Activated T-helper 1 cell treated with anti-CD3 and anti-CD28 coated beads, Interleukin-12 subunit alpha, Interleukin-12 subunit beta, Interleukin-2, Interleukin-4 antibody, amounts not matched to agents 30 ng/mL and 10 ng/mL and 1 ng/mL, durations not matched to agents 14 hours and 24 hours and 36 hours (primary cell): ENCODE measurements at regions of chr2 and their contacts with region 1.

Region 1: GRCh38 chr2:10812362-10813162 is at the start of gene PDIA6:
- DNase-seq: peak; percentile 95
- H3K4me3 Mint-ChIP-seq: peak within 1 kb of the TSS; percentile 92
- H3K27ac Mint-ChIP-seq: peak within 1 kb of the TSS; percentile 91
- H3K4me1 Mint-ChIP-seq: peaks cover 31% of the 10 kb centered on the region
- H3K27me3 Mint-ChIP-seq: peaks cover 13% of the 10 kb centered on the region
- total RNA-seq, gene PDIA6: 171 and 173 TPM in 2 replicates

Region 2: GRCh38 chr2:8836971-8837794 is 1975.4 kb before region 1 on chr2 and contains the start of gene KIDINS220:
- intact Hi-C with region 1: loop called (anchors 5 kb)
- DNase-seq: peak; percentile 72
- H3K4me3 Mint-ChIP-seq: peak within 1 kb of the TSS; percentile 100
- H3K27ac Mint-ChIP-seq: peak within 1 kb of the TSS; percentile 96
- H3K4me1 Mint-ChIP-seq: peaks cover 31% of the 10 kb centered on the region
- H3K27me3 Mint-ChIP-seq: no peaks in the 10 kb centered on the region
- total RNA-seq, gene KIDINS220: 24.3 and 24.5 TPM in 2 replicates

Region 3: DNA sequence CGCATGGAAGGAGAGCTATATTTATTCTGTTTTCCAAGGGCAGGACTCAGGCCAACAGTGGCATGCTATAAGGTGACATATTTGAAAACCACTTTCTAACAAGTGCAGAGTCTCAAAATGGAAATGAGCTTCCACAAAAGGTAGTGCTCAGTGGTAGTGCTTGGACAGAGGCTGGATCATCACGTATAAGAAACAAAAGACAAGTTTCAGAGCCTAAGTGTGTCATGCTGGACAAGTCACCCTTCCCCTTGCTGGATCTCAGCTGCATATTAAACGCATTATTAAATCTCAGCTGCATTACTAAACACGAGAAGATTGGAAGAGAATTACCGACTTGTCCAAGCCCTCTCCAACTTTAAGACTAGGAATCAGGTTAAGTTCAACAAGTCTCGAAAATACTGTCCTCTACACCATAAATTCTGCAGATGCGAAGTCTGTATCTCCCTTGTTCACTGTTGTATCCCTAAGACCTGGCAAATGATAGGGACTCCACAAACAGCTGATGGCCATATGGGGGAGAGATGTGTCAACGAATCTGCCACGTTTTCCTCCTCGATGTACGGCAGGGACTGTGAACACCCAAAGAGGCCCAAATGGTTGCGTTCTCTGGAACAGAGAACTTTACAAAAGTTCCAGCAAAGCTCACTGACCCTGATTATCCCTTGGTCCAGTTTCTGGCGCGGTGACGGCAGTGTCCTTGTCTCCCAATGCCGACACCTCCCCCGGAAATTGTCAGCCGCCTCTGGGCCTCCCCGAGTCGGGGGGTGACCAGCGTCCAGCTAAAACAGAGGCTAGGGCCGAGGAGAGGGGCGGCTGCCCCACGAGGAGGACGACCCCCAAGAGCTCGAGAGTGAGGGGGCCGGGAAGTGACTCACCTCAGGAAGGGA is 123.4 kb before region 1 on chr2:
- intact Hi-C with region 1: loop called (anchors 2 kb)
- DNase-seq: no peak
- H3K4me3 Mint-ChIP-seq: no peak overlapping the region
- H3K27ac Mint-ChIP-seq: no peak overlapping the region
- H3K4me1 Mint-ChIP-seq: peaks cover 8% of the 10 kb centered on the region
- H3K27me3 Mint-ChIP-seq: no peaks in the 10 kb centered on the region

Region 4: DNA sequence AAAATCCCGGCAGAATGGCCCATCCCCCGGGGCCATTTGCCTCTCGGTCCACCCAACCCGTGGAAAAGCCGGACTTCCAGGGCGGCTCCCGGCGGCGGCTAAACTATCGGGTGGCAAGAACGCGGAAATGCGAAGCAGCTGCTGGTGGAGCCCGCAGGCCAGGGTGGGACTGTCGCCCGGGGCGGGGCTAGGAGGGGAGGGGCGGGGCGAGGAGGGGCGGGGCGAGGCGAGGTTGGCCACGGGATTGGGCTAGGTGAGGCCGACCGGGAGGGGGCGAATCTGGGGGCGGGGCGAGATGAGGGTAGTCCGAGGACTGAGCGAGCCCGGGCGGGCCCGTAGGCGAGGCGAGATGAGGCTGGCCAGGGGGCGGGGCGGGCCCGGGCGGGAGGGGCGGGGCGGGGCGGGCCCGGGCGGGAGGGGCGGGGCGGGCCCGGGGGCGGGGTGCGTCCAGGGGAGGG is 342.4 kb after region 1 on chr2:
- intact Hi-C with region 1: loop called (anchors 1 kb)
- DNase-seq: peak; percentile 94
- H3K4me3 Mint-ChIP-seq: peak overlapping the region; percentile 85
- H3K27ac Mint-ChIP-seq: peak overlapping the region; percentile 83
- H3K4me1 Mint-ChIP-seq: peaks cover 12% of the 10 kb centered on the region
- H3K27me3 Mint-ChIP-seq: peaks cover 7% of the 10 kb centered on the region

Region 5: GRCh38 chr2:11753886-11754699 is 941.5 kb after region 1 on chr2:
- intact Hi-C with region 1: loop called (anchors 5 kb)
- DNase-seq: peak; percentile 57
- H3K4me3 Mint-ChIP-seq: peak overlapping the region; percentile 69
- H3K27ac Mint-ChIP-seq: peak overlapping the region; percentile 82
- H3K4me1 Mint-ChIP-seq: peaks cover 85% of the 10 kb centered on the region
- H3K27me3 Mint-ChIP-seq: no peaks in the 10 kb centered on the region